CD4-positive, alpha-beta T cell (primary cell): ENCODE measurements at regions of chr11 and their contacts with region 1.

Region 1: DNA sequence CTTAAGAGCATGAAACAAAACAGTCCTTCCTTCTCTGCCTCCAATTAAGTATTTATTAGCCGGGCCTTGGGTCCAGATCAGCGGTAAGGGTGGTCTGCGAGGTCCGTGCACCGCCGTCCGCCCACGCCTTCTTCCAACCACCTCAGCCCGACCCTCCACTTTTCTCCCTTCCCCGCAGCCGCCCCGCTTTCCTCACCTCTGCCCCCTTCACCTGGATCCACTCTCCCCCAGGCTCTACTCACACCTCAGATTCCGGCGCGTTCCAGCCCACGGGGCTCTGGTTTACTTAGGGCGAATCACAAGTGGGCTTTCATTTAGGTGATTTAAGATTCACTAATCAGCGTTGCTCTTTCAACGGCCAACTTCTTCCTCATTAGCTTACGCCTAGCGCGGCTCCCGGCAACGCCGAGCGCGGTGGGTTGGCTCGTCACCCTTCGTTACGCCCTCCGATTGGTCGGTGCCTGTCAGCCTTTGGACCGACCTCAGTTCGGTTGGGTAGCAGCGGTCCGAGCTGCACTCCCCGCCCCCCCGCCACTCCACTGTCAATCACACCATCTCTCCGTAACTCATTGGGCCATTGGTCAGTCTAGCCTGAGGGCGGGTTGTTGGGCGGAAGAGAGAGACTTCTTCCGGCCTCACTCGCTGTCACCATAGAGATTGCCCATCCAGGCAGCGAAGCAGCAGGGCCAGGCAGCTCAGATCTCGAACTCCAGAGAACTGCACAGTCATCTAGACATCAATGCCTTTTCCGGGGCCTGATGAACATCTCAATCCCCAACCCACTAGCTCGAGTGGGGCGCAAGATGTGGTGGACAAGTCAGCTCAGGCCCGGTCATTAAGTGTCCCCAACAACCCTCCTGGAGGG is at the start of gene TMEM218:
- DNase-seq: peak; percentile 89 to 99 (median 92)
- ATAC-seq: peak; percentile 94
- H3K4me3 ChIP-seq: peak within 1 kb of the TSS; percentile 90
- H3K4me3 Mint-ChIP-seq: peak within 1 kb of the TSS; percentile 97
- H3K27ac ChIP-seq: peak within 1 kb of the TSS; percentile 29 to 77
- H3K27ac Mint-ChIP-seq: peak within 1 kb of the TSS; percentile 84
- H3K4me1 ChIP-seq: peaks cover 16% of the 10 kb centered on the region
- H3K4me1 Mint-ChIP-seq: peaks cover 26% of the 10 kb centered on the region
- H3K27me3 ChIP-seq: no peaks in the 10 kb centered on the region
- H3K27me3 Mint-ChIP-seq: no peaks in the 10 kb centered on the region
- CTCF ChIP-seq: no peak
- total RNA-seq, gene TMEM218: 3.9 to 4.4 TPM

Region 2: GRCh38 chr11:124622531-124623451 is 488.8 kb before region 1 on chr11 and contains the start of gene TBRG1:
- CTCF ChIA-PET with region 1: no interaction called
- POLR2A ChIA-PET with region 1: interaction called, 11 read pairs
- intact Hi-C with region 1: loop called in 1 of 2 experiments (anchors 5 kb)
- DNase-seq: peak; percentile 63 to 94 (median 77)
- ATAC-seq: peak; percentile 95
- H3K4me3 ChIP-seq: peak within 1 kb of the TSS; percentile 83
- H3K4me3 Mint-ChIP-seq: peak within 1 kb of the TSS; percentile 97
- H3K27ac ChIP-seq: peak within 1 kb of the TSS; percentile 88 to 90
- H3K27ac Mint-ChIP-seq: peak within 1 kb of the TSS; percentile 96
- H3K4me1 ChIP-seq: peaks cover 17% of the 10 kb centered on the region
- H3K4me1 Mint-ChIP-seq: peaks cover 49% of the 10 kb centered on the region
- H3K27me3 ChIP-seq: no peaks in the 10 kb centered on the region
- H3K27me3 Mint-ChIP-seq: peaks cover 15% of the 10 kb centered on the region
- CTCF ChIP-seq: no peak
- total RNA-seq, gene TBRG1: 62.4 to 65.9 TPM

Region 3: GRCh38 chr11:124875943-124876817 is 235.4 kb before region 1 on chr11:
- CTCF ChIA-PET with region 1: interaction called, 4 read pairs
- POLR2A ChIA-PET with region 1: interaction called, 10 read pairs
- intact Hi-C with region 1: loop called in 1 of 2 experiments (anchors 5 kb)
- DNase-seq: peak; percentile 54 to 89 (median 71)
- ATAC-seq: peak; percentile 96
- H3K4me3 ChIP-seq: peak overlapping the region; percentile 83
- H3K4me3 Mint-ChIP-seq: peak overlapping the region; percentile 94
- H3K27ac ChIP-seq: peak overlapping the region; percentile 62 to 76
- H3K27ac Mint-ChIP-seq: peak overlapping the region; percentile 87
- H3K4me1 ChIP-seq: peaks cover 23% of the 10 kb centered on the region
- H3K4me1 Mint-ChIP-seq: peaks cover 25% of the 10 kb centered on the region
- H3K27me3 ChIP-seq: peaks cover 10 to 40% of the 10 kb centered on the region in 2 experiments
- H3K27me3 Mint-ChIP-seq: peaks cover 42% of the 10 kb centered on the region
- CTCF ChIP-seq: peak; percentile 80

Region 4: DNA sequence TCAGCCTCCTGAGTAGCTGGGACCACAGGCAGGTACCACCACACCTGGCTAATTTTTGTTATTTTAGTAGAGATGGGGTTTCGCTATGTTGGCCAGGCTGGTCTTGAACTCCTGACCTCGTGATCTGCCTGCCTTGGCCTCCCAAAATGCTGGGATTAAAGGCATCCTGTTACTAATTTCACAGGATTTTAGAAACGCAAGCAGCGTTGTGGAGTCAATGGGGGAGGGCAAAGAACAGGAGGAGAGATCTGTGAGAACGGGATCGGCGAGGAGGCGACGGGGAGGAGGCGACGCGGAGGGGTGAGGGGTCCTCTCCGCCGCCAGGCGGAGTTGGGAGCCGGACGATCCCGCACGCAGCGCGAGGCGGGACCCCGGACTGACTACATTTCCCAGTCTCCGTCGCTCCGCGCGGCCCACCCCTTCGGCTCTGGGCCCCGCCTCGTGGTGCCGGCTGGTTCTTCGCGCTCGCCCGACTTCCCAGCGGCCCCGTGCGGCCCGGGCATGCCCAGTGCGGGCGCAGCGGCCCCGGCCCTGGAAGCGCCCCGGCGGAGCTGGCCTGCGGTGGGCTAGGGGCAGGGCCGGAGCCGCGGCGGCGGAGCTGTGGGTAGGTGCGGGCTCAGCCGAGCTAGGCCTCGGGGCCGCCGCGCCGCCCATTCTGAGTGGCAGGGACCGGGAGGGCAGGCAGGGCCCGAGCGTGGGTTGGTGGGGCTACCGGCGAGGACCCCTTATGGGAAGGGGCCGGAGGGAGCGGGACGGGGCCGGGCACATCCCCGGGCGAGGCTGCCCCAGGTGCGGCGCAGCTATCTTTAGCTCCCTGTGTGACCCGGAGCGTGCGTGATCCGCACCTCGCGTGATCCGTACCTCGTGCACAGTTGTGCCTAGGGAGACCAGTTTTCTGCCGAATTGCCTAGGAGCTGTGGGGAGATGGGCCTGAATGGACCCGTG is 457.7 kb after region 1 on chr11 and contains the start of gene EI24:
- CTCF ChIA-PET with region 1: no interaction called
- POLR2A ChIA-PET with region 1: no interaction called
- intact Hi-C with region 1: loop called in 1 of 2 experiments (anchors 10 kb)
- DNase-seq: peak; percentile 76 to 95 (median 86)
- ATAC-seq: peak; percentile 94
- H3K4me3 ChIP-seq: peak within 1 kb of the TSS; percentile 80
- H3K4me3 Mint-ChIP-seq: peak within 1 kb of the TSS; percentile 95
- H3K27ac ChIP-seq: peak within 1 kb of the TSS; percentile 68 to 74
- H3K27ac Mint-ChIP-seq: peak within 1 kb of the TSS; percentile 84
- H3K4me1 ChIP-seq: peaks cover 18% of the 10 kb centered on the region
- H3K4me1 Mint-ChIP-seq: peaks cover 26% of the 10 kb centered on the region
- H3K27me3 ChIP-seq: no peaks in the 10 kb centered on the region
- H3K27me3 Mint-ChIP-seq: no peaks in the 10 kb centered on the region
- CTCF ChIP-seq: peak; percentile 76
- total RNA-seq, gene EI24: 21.0 to 22.8 TPM

Region 5: DNA sequence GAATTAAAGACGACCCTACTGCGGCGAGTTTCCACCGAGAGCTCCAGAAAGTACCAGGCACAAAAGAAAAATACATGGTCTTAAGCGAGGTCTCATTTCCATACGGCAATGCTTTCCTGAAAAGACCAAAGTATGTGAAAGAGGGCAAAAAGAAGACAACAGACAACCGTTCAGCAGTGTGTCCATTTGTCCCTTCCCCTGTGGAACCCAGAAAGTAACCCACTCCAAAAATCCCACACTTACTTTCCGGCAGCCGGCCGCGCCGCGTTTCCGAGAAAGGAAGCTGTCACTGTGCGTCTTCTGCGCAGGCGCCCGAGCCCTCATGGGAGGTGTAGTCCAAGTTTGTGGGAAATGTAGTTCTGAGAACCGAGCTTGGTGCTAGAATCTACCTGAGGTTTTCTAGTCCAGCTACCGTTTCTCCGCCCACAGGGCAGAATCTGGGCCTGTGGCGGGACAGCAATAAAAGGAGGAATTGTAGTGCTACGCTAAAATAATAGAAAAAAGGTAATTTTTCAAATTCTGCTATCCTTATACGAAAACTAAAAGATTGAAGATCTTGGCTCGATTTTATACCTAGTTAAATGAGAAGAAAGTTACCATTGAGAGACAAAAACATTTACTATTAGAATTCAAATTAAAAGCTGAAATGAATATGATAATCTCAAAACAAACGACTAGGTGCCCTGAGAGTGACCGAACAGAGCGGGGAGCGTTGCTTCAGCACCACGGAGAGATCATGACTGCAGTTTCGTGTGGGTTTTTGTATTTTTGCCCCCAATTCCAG is 791.5 kb after region 1 on chr11 and contains the start of gene PUS3:
- CTCF ChIA-PET with region 1: no interaction called
- POLR2A ChIA-PET with region 1: no interaction called
- intact Hi-C with region 1: loop called in 1 of 2 experiments (anchors 5 kb)
- DNase-seq: peak; percentile 75 to 92 (median 84)
- ATAC-seq: peak; percentile 93
- H3K4me3 ChIP-seq: peak within 1 kb of the TSS; percentile 86
- H3K4me3 Mint-ChIP-seq: peak within 1 kb of the TSS; percentile 95
- H3K27ac ChIP-seq: peak within 1 kb of the TSS; percentile 55
- H3K27ac Mint-ChIP-seq: peak within 1 kb of the TSS; percentile 88
- H3K4me1 ChIP-seq: peaks cover 29% of the 10 kb centered on the region
- H3K4me1 Mint-ChIP-seq: peaks cover 46% of the 10 kb centered on the region
- H3K27me3 ChIP-seq: peaks cover 9 to 27% of the 10 kb centered on the region in 2 experiments
- H3K27me3 Mint-ChIP-seq: peaks cover 41% of the 10 kb centered on the region
- CTCF ChIP-seq: no peak
- total RNA-seq, gene PUS3: 6.0 to 7.3 TPM